ENCODE measurements at regions of chr10 and their contacts with region 1.

Region 1: GRCh38 chr10:6202684-6203330 is at the start of gene PFKFB3:
- DNase-seq: peak; percentile 99
- H3K4me3 Mint-ChIP-seq: peak within 1 kb of the TSS; percentile 92
- H3K27ac Mint-ChIP-seq: peak within 1 kb of the TSS; percentile 97
- H3K4me1 Mint-ChIP-seq: peaks cover 42% of the 10 kb centered on the region
- H3K27me3 Mint-ChIP-seq: no peaks in the 10 kb centered on the region
- total RNA-seq, gene PFKFB3: 108 TPM in 2 replicates

Region 2: DNA sequence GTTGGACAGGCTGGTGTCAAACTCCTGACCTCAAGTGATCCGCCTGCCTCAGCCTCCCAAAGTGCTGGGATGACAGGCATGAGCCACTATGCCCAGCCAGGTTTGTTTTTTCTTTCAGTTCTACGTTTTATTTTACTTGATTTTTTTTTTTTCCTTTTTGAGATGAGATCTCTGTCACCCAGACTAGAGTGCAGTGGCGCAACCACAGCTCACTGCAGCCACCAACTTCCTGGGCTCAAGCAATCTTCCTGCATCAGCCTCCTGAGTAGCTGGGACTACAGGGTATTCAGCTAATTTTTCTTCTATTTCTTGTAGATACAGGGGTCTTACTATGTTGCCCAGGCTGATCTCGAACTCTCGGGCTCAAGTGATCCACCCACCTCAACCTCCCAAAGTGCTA is 413.8 kb before region 1 on chr10:
- intact Hi-C with region 1: no loop called
- DNase-seq: peak; percentile 71
- H3K4me3 Mint-ChIP-seq: peak overlapping the region; percentile 32
- H3K27ac Mint-ChIP-seq: no peak overlapping the region
- H3K4me1 Mint-ChIP-seq: peaks cover 27% of the 10 kb centered on the region
- H3K27me3 Mint-ChIP-seq: no peaks in the 10 kb centered on the region

Region 3: GRCh38 chr10:6108603-6109443 is 94.0 kb before region 1 on chr10:
- intact Hi-C with region 1: loop called (anchors 1 kb)
- DNase-seq: peak; percentile 82
- H3K4me3 Mint-ChIP-seq: no peak overlapping the region
- H3K27ac Mint-ChIP-seq: peak overlapping the region; percentile 71
- H3K4me1 Mint-ChIP-seq: peaks cover 35% of the 10 kb centered on the region
- H3K27me3 Mint-ChIP-seq: no peaks in the 10 kb centered on the region

Region 4: GRCh38 chr10:6163364-6164270 is 39.2 kb before region 1 on chr10:
- intact Hi-C with region 1: loop called (anchors 1 kb)
- DNase-seq: peak; percentile 98
- H3K4me3 Mint-ChIP-seq: peak overlapping the region; percentile 98
- H3K27ac Mint-ChIP-seq: peak overlapping the region; percentile 98
- H3K4me1 Mint-ChIP-seq: peaks cover 49% of the 10 kb centered on the region
- H3K27me3 Mint-ChIP-seq: no peaks in the 10 kb centered on the region

Region 5: GRCh38 chr10:6269953-6270867 is 67.4 kb after region 1 on chr10:
- intact Hi-C with region 1: loop called (anchors 1 kb)
- DNase-seq: peak; percentile 92
- H3K4me3 Mint-ChIP-seq: peak overlapping the region; percentile 62
- H3K27ac Mint-ChIP-seq: peak overlapping the region; percentile 94
- H3K4me1 Mint-ChIP-seq: peaks cover 62% of the 10 kb centered on the region
- H3K27me3 Mint-ChIP-seq: no peaks in the 10 kb centered on the region

Region 6: DNA sequence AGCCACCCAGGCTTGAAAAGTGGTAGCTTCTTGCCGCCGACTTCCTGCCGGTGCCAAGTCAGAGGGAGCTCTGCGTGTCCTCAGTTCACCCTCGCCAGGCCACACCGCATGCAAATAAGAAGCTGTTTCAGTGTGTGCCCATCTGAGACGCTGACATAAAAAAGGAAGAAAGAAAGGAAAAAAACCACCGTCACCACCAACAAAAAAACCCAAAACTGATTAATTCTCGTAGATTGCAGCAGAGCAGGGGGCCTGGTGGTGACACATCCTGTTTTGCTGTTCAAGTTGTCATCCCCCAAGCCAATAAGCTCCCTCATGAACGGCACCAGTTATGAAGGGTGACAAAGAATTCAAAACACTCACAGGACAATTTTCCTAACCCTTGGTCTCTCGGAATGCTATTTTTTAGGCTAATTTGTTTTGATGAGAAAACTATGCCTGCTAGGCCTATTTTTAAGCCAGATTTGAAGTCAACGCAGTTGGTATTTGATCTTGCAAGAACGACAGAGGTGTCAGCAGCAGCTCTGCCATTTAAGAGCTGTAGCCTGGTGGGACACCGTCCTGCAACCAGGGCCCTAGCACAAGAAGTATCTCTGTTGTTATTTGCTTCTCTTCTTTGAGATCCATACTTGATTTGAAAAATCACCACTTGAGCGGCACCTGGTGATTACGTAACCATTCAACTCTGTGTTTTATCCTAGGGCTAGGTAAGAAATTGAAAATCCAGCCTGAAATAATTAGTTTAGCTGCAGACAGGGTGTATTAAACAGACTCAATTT is 145.5 kb after region 1 on chr10:
- intact Hi-C with region 1: loop called (anchors 1 kb)
- DNase-seq: peak; percentile 91
- H3K4me3 Mint-ChIP-seq: peak overlapping the region; percentile 78
- H3K27ac Mint-ChIP-seq: peak overlapping the region; percentile 92
- H3K4me1 Mint-ChIP-seq: peaks cover 46% of the 10 kb centered on the region
- H3K27me3 Mint-ChIP-seq: no peaks in the 10 kb centered on the region

Region 7: GRCh38 chr10:6667679-6668270 is 465.0 kb after region 1 on chr10:
- intact Hi-C with region 1: loop called (anchors 5 kb)
- DNase-seq: peak; percentile 83
- H3K4me3 Mint-ChIP-seq: no peak overlapping the region
- H3K27ac Mint-ChIP-seq: peak overlapping the region; percentile 31
- H3K4me1 Mint-ChIP-seq: peaks cover 22% of the 10 kb centered on the region
- H3K27me3 Mint-ChIP-seq: peaks cover 11% of the 10 kb centered on the region

Measured in activated CD4-positive, alpha-beta T cell treated with anti-CD3 and anti-CD28 coated beads, Interleukin-2, amount 10 ng/mL, durations not matched to agents 24 days and 14 days (primary cell).